Activated CD4-positive, alpha-beta memory T cell treated with anti-CD3 and anti-CD28 coated beads for 36 hours (primary cell): ENCODE measurements at regions of chr6 and their contacts with region 1.

Region 1: GRCh38 chr6:85460921-85461797 is 11.3 kb downstream of the NT5E start:
- DNase-seq: peak; percentile 60
- H3K4me3 Mint-ChIP-seq: no peak overlapping the region
- H3K27ac Mint-ChIP-seq: peak overlapping the region; percentile 72
- H3K4me1 Mint-ChIP-seq: peaks cover 55% of the 10 kb centered on the region
- H3K27me3 Mint-ChIP-seq: peaks cover 21% of the 10 kb centered on the region

Region 2: GRCh38 chr6:85186546-85187175 is 274.5 kb before region 1 on chr6:
- CTCF ChIA-PET with region 1: no interaction called
- POLR2A ChIA-PET with region 1: no interaction called
- intact Hi-C with region 1: no loop called
- DNase-seq: no peak
- H3K4me3 Mint-ChIP-seq: no peak overlapping the region
- H3K27ac Mint-ChIP-seq: no peak overlapping the region
- H3K4me1 Mint-ChIP-seq: no peaks in the 10 kb centered on the region
- H3K27me3 Mint-ChIP-seq: no peaks in the 10 kb centered on the region

Region 3: DNA sequence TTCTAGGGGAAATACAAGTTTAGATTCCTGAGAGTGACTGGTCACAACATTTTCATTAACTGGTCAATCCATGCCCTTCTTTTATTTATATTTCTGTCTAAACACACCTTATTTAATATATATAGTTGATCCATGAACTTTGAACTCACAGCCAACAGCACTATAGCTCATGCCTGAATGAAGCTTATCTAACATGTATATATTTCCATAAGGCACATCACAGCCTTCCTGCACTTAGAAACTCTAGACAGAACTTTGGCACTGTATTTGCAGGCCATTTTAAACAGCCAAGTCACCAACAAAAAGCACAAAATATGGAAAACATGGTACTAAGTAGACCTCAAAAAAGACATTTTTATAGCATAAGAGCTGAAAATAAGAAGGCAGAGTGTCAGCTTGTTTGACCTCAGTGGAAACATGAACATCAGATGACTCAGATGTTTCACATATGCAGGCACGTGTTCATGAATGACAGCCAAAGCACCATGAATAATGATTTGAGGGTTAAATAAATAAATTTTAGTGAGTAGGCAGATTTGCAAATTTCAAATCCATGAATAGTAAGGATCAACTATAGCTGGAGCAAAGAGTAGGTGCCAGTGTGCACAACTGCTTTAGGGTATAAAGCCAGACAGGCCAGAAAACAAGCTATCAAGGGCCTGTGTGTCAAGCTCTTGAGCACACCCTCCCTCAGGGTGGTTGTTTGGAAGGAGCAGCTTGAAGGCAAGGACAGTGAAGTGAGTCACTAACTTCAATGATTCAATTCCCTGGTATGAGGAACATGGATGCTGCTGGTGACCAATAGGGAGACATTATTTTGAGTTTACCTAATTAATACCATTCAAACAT is 100.1 kb before region 1 on chr6:
- CTCF ChIA-PET with region 1: no interaction called
- POLR2A ChIA-PET with region 1: interaction called, 3 read pairs
- intact Hi-C with region 1: loop called (anchors 1 kb)
- DNase-seq: no peak
- H3K4me3 Mint-ChIP-seq: no peak overlapping the region
- H3K27ac Mint-ChIP-seq: no peak overlapping the region
- H3K4me1 Mint-ChIP-seq: peaks cover 5% of the 10 kb centered on the region
- H3K27me3 Mint-ChIP-seq: peaks cover 4% of the 10 kb centered on the region

Region 4: GRCh38 chr6:85449818-85450759 is 11.1 kb before region 1 on chr6 and contains the start of gene NT5E:
- CTCF ChIA-PET with region 1: interaction called, 3 read pairs
- POLR2A ChIA-PET with region 1: interaction called, 12 read pairs
- intact Hi-C with region 1: loop called (anchors 1 kb)
- DNase-seq: peak; percentile 51
- H3K4me3 Mint-ChIP-seq: peak within 1 kb of the TSS; percentile 60
- H3K27ac Mint-ChIP-seq: peak within 1 kb of the TSS; percentile 0
- H3K4me1 Mint-ChIP-seq: peaks cover 18% of the 10 kb centered on the region
- H3K27me3 Mint-ChIP-seq: peaks cover 53% of the 10 kb centered on the region
- total RNA-seq, gene NT5E: 3.7 to 3.8 TPM

Region 5: GRCh38 chr6:85506441-85507093 is 45.4 kb after region 1 on chr6:
- CTCF ChIA-PET with region 1: no interaction called
- POLR2A ChIA-PET with region 1: no interaction called
- intact Hi-C with region 1: loop called (anchors 1 kb)
- DNase-seq: peak; percentile 70
- H3K4me3 Mint-ChIP-seq: no peak overlapping the region
- H3K27ac Mint-ChIP-seq: peak overlapping the region; percentile 4
- H3K4me1 Mint-ChIP-seq: peaks cover 10% of the 10 kb centered on the region
- H3K27me3 Mint-ChIP-seq: no peaks in the 10 kb centered on the region

Region 6: DNA sequence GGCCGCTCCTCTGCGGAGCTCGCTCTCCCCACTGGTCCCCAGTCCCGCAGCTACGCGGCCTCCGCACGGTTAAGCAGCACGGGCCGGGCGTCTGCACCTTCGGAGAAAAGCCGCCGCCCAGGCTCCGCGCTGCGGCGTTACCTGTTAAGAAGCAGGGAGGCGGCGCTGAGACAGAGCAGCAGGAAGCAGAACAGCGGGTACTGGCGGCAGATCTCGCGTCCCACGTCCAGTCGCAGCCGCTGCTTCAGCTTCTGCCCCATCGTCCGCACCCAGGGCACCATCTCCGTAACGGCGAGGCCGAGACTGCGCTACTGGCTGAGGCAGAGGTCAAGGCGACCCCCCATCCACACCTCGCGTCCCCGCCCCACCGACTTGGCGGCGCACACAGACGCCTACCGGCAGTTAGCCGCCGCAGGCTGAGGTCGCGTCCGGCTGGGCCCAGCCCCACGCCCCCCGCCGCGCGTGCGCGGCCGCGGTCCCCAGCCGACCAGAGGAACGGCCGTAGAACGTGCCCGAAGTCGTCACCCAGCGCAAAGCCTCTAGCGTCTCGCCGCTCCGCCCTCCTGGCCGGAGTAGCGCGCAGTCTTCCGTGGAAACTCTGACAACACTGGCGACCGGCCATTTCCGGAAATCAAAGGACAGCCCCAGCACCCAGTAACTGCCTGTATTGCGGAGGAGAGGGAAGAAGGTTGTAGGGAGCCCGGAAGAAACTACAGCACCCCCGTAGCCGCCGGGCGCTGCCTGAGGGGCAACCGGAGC is 132.5 kb after region 1 on chr6 and contains the start of gene SNX14:
- CTCF ChIA-PET with region 1: no interaction called
- POLR2A ChIA-PET with region 1: interaction called, 4 read pairs
- intact Hi-C with region 1: loop called (anchors 1 kb)
- DNase-seq: peak; percentile 90
- H3K4me3 Mint-ChIP-seq: peak within 1 kb of the TSS; percentile 84
- H3K27ac Mint-ChIP-seq: peak within 1 kb of the TSS; percentile 94
- H3K4me1 Mint-ChIP-seq: peaks cover 33% of the 10 kb centered on the region
- H3K27me3 Mint-ChIP-seq: no peaks in the 10 kb centered on the region
- total RNA-seq, gene SNX14: 50.9 to 59.6 TPM

Region 7: DNA sequence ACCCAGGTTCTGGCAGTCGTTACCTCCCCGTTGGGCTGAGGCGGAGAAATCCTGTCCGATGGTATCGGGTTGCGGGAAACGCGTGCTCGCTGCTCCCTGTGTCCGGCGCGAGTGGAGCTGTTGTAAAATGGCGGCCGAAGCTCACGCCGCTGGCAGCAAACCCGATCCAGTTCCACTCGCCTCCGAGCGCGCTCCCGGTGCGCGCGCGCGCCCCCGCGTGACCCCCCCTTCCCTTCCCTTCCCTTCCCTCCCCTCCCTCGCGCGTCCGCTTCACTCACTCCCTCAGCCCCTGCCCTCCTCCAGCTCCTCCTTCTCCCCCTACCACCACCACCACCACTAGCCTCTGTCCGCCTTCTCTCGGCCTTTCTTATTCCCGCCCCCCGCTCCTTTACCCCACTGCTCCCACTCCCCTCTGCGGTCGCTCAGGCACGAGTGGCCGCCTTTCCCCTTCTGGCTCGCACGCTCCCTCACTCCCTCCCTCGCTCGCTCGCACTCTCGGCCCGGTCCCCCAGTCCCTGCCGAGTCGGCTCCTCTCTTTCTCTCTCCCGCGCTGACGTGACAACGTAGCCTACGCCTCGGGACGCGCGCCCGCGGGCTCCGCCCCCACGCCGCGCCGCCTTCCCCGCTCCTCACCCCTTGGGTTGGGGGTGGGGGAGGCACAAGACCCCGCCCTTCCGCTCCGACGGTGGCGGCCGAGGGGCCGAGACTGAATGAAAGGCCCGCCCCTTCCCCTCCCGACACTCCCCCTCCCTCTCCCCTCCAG is 181.8 kb after region 1 on chr6 and contains the start of gene SYNCRIP:
- CTCF ChIA-PET with region 1: no interaction called
- POLR2A ChIA-PET with region 1: no interaction called
- intact Hi-C with region 1: loop called (anchors 5 kb)
- DNase-seq: peak; percentile 98
- H3K4me3 Mint-ChIP-seq: peak within 1 kb of the TSS; percentile 86
- H3K27ac Mint-ChIP-seq: peak within 1 kb of the TSS; percentile 98
- H3K4me1 Mint-ChIP-seq: peaks cover 39% of the 10 kb centered on the region
- H3K27me3 Mint-ChIP-seq: no peaks in the 10 kb centered on the region
- total RNA-seq, gene SYNCRIP: 138 to 139 TPM

Region 8: DNA sequence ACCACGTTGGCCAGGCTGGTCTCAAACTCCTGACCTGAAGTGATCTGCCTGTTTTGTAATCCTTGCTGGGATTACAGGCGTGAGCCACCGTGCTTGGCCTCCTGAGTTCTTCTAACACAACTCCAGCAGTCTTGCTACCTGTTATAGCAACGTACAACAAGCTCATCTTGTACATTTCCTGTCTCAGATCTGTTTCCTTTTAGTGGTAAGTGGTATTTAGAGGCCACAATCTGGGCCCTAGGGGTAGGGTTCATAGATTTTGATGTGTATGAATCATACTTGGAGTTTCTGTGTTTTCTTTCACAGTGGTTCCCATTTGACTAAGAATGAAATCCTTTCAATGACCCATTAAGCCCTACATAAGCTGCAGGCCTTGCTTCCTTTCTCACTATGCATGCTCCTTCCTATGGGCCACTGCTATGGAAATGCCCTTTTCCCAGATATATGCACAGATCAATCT is 208.6 kb after region 1 on chr6:
- CTCF ChIA-PET with region 1: no interaction called
- POLR2A ChIA-PET with region 1: no interaction called
- intact Hi-C with region 1: loop called (anchors 5 kb)
- DNase-seq: peak; percentile 69
- H3K4me3 Mint-ChIP-seq: peak overlapping the region; percentile 63
- H3K27ac Mint-ChIP-seq: peak overlapping the region; percentile 93
- H3K4me1 Mint-ChIP-seq: peaks cover 57% of the 10 kb centered on the region
- H3K27me3 Mint-ChIP-seq: no peaks in the 10 kb centered on the region

Region 9: GRCh38 chr6:85936912-85937311 is 475.8 kb after region 1 on chr6:
- CTCF ChIA-PET with region 1: no interaction called
- POLR2A ChIA-PET with region 1: no interaction called
- intact Hi-C with region 1: no loop called
- DNase-seq: no peak
- H3K4me3 Mint-ChIP-seq: no peak overlapping the region
- H3K27ac Mint-ChIP-seq: no peak overlapping the region
- H3K4me1 Mint-ChIP-seq: no peaks in the 10 kb centered on the region
- H3K27me3 Mint-ChIP-seq: peaks cover 3% of the 10 kb centered on the region